GM10248 (cell line): ENCODE measurements at regions of chr19 and their contacts with region 1.

Region 1: DNA sequence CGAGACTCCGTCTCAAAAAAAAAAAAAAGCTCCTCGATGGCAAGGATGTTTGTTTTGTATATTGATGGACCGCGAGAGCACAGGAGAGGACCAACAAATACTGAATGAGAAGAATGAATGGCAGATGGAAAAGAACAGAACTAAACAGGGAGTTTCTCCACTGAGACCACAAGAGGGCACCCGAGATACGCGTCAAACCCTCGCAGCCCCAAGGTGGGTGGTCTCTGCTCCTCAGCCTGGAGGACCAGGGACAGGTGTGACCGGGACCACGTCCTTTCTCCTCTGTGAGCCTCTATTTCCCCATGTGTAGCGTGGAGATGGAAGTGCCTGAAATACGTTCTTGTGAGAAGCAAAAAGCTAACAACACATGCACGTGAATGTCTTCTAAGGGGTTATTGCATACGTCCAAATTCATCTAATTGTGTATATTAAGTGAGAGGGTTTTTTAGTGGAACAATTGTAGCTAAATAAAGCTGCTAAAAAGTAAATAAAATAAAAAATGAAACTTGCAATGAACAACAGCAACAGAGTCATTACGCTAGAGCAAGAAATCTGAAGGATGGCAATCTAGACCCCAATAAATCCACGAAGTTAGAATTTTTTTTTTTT is 8.3 kb upstream of the CDC42EP5 start:
- DNase-seq: peak; percentile 61
- CTCF ChIP-seq: peak; percentile 58

Region 2: DNA sequence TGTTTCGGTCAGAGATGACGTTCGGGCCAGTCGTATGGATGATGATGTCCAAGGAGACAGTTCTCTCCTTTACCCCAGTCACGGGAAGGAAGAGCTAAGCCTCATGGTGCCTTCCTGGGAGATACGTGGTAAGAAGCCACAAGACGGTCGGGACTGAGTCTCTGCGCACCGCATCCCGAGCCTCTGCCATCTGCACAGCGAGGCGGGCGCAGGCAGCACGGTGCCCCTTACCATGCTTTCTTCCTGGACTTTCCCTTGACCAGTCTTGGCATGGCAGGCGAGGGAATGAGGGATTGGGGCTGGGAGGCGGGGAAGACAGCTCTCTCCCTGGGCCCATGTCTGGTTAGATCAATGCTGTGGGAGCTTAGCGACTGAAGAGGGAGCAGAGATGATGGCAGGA is 11.1 kb after region 1 on chr19:
- CTCF ChIA-PET with region 1: interaction called, 11 read pairs
- POLR2A ChIA-PET with region 1: no interaction called
- DNase-seq: no peak
- CTCF ChIP-seq: no peak

Region 3: DNA sequence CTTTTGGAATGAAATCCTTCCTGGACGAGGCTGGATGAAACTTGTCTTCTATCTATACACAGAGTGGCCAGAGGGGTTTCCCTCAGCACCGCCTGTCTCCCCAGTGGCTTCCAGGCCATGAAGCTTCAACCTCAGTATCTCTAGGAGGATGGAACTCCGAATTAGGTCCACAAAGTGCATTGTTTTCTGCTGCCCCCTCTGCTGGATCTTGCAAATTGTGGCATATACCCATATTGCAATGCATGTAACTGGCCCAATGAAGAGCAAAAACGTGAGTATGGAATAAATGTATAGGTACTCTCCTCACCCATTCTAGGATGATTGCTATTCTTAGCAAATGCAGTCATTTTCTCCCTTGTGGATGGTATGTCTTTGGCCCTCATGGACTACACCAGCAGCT is 166.7 kb after region 1 on chr19:
- CTCF ChIA-PET with region 1: interaction called, 62 read pairs
- POLR2A ChIA-PET with region 1: no interaction called
- DNase-seq: no peak
- CTCF ChIP-seq: peak; percentile 26

Region 4: DNA sequence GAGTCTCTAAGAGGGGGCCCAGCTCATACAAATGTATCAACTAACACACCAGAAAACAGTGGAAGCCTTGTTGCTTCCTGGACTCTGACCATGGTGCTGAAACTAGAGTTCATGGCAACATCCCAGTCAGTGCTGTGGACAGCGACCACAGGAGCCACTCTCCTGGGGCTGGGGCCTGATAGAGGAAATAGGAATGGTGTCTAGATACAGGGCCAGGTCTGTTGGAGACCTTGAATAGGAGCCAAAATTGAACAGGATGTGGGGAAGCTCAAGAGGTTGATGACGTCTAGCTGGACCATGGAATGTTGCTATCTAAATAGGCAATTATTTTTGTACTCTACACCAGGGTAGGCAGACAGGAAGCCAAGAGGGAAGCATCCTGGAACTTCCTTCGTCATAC is 203.1 kb after region 1 on chr19:
- CTCF ChIA-PET with region 1: interaction called, 20 read pairs
- POLR2A ChIA-PET with region 1: no interaction called
- DNase-seq: no peak
- CTCF ChIP-seq: no peak